ENCODE measurements at regions of chr16 and their contacts with region 1.

Region 1: DNA sequence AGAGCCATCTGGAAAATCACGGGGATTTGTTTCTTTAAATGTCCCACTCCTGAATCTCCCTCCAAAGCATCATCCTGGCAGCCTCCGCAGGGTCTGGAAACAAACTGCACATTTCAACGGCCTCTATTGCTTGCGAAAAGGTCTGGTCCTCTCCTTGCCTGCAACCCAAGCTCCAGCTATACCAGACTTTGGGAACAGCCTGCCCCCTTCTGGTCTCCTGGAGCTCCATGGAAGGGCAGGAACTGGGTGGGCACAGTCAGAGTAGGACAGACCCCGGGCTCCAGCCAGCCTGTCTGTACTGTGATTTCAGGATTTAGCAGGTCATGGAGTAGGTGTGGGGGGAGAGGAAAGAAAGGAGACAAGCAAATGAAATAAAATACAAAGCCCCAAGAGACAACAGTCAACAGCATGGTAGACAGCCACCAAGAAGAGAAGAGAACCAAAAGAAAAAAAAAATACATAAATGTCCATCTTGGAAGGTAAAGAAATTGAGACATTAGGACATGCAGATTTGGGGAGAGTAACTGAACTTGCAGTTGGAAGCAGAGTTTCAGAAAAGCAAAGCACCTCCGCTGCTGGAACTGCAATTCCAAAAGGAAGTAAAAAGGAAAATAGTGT is 2.7 kb downstream of the XYLT1 start:
- DNase-seq: peak; percentile 34
- H3K4me3 ChIP-seq: no peak overlapping the region
- H3K27ac ChIP-seq: no peak overlapping the region
- H3K4me1 ChIP-seq: no peaks in the 10 kb centered on the region
- H3K27me3 ChIP-seq: peaks cover 28% of the 10 kb centered on the region
- CTCF ChIP-seq: peak; percentile 52

Region 2: DNA sequence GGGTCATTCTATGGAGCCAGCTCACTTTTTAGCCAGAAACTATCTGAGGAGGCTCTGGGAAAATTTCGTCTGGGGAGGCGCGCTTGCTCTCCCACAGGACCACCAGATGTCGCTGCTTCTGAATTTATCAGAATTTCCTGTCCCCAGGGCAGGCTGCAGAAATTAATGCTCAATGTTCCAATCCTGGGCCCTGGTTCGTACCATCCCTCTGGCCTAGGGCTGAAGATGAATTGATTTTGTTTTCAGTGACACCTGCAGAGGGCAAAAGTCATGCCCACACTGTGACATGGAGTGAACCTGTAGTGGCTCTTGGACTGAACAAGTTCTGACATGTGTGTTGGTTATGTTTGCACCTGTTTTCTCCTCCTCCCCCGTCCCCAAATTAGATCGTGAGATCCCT is 606.5 kb before region 1 on chr16:
- CTCF ChIA-PET with region 1: interaction called, 6 read pairs
- POLR2A ChIA-PET with region 1: no interaction called
- intact Hi-C with region 1: loop called (anchors 10 kb)
- DNase-seq: peak; percentile 44
- H3K4me3 ChIP-seq: no peak overlapping the region
- H3K27ac ChIP-seq: no peak overlapping the region
- H3K4me1 ChIP-seq: no peaks in the 10 kb centered on the region
- H3K27me3 ChIP-seq: no peaks in the 10 kb centered on the region
- CTCF ChIP-seq: peak; percentile 74

Region 3: DNA sequence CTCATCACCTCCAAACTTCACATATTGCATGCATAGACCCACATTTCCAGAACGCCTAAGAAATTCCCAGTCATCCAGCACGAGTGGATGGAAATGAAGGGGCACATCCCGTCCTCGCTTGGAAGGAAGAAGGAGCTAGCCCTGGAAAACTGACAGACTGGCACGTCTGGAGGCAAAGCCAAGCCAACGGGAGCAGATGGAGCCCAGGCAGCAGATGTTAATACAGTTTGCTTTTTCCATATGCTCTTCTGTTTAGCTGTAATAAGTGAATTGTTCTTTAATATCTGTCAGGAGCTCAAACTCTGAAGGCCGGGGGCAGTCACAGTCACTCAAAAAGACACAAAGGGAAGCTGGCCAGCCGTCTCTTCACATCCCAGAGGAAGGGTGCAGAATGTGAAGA is 185.0 kb before region 1 on chr16:
- CTCF ChIA-PET with region 1: no interaction called
- POLR2A ChIA-PET with region 1: no interaction called
- intact Hi-C with region 1: loop called (anchors 10 kb)
- DNase-seq: no peak
- H3K4me3 ChIP-seq: no peak overlapping the region
- H3K27ac ChIP-seq: no peak overlapping the region
- H3K4me1 ChIP-seq: no peaks in the 10 kb centered on the region
- H3K27me3 ChIP-seq: no peaks in the 10 kb centered on the region
- CTCF ChIP-seq: no peak

Region 4: GRCh38 chr16:17483351-17483750 is 15.3 kb after region 1 on chr16:
- CTCF ChIA-PET with region 1: no interaction called
- POLR2A ChIA-PET with region 1: no interaction called
- intact Hi-C with region 1: no loop called
- DNase-seq: no peak
- H3K4me3 ChIP-seq: no peak overlapping the region
- H3K27ac ChIP-seq: no peak overlapping the region
- H3K4me1 ChIP-seq: no peaks in the 10 kb centered on the region
- H3K27me3 ChIP-seq: no peaks in the 10 kb centered on the region
- CTCF ChIP-seq: no peak